A549 (cell line): ENCODE measurements at regions of chr5 and their contacts with region 1.

Region 1: GRCh38 chr5:67165526-67166459 is 30.8 kb downstream of the CD180 start:
- DNase-seq: peak; percentile 56 to 82
- ATAC-seq: peak; percentile 93 to 97
- H3K4me3 ChIP-seq: 0 out of 3 replicates have a peak overlapping the region, but pooled peaks have one; percentile 9
- H3K27ac ChIP-seq: peak overlapping the region; percentile 71 to 85
- H3K4me1 ChIP-seq: peaks cover 24% of the 10 kb centered on the region
- CTCF ChIP-seq: peak; percentile 77
- EP300 ChIP-seq: no peak
- POLR2A ChIP-seq: no peak
- RAD21 ChIP-seq: peak; percentile 66 to 71

Region 2: GRCh38 chr5:67181648-67182221 is 15.9 kb after region 1 on chr5:
- CTCF ChIA-PET with region 1: interaction called, 19 read pairs
- POLR2A ChIA-PET with region 1: no interaction called
- DNase-seq: no peak
- ATAC-seq: no peak
- H3K4me3 ChIP-seq: no peak overlapping the region
- H3K27ac ChIP-seq: no peak overlapping the region
- H3K4me1 ChIP-seq: no peaks in the 10 kb centered on the region
- CTCF ChIP-seq: no peak
- EP300 ChIP-seq: no peak
- POLR2A ChIP-seq: no peak
- RAD21 ChIP-seq: no peak

Region 3: DNA sequence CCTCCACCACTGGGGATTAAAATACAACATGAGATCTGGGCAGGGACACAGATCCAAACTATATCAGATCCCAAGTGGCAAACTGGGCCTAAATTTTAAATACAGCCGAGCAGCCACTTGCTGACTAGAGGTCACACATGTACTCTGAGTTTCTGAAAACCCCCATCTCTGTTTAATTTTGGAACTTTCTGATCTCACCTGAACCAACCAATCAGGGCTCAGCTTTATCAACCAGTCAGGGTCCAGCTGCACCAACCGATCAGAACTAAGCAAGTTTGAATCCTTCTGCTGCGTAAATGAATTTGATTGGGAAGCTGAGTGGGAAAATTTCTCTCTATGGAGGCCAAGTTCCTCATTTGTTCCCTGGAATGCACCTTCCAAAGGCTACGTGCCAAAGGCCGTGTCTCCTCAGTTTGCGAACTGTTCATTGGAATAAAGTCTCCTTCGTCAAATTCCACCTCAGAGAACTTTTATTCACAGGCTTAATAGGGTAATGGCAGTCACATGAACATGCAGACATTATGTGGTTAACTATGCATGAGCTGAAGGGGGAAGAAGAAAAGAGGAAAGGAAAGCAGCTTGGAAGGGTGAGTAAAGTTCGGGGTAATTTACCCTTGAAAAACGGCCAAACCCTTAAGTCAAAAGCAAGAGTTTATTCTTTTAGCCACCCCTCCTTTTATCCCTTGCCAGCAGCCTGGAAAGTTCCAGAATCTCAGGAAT is 27.1 kb after region 1 on chr5:
- CTCF ChIA-PET with region 1: interaction called, 13 read pairs
- POLR2A ChIA-PET with region 1: no interaction called
- DNase-seq: no peak
- ATAC-seq: no peak
- H3K4me3 ChIP-seq: no peak overlapping the region
- H3K27ac ChIP-seq: no peak overlapping the region
- H3K4me1 ChIP-seq: no peaks in the 10 kb centered on the region
- CTCF ChIP-seq: no peak
- EP300 ChIP-seq: no peak
- POLR2A ChIP-seq: no peak
- RAD21 ChIP-seq: no peak

Region 4: DNA sequence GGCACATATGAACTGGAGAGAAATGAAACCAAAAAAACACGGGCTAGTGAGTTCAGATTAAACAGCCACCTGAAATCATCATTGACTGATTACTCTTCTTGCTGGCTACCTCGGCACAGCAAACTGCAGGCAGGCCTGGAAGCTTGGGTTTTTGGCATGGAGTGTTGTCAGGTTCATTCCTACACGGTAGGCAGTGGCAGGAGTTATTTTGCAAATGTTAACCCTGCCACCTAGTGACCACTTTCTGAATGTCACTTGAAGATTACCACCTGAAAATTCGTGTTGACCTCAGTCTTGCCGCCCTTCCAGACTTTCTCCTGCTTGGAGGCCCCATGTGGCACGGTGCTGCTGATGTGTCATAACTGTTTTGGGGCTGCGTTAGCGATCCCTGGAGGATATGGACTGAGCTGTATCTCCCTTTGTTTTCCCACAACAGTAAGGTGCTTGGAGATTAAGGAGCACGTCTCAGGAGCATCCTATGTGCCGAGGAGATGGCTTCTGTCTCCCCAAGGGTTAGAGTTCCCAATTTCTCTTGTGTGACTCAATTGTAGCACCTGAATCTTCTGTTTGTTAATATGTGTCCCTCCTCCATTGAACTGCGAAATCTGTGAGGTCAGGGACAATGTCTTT is 43.5 kb after region 1 on chr5:
- CTCF ChIA-PET with region 1: interaction called, 190 read pairs
- POLR2A ChIA-PET with region 1: interaction called, 8 read pairs
- DNase-seq: peak; percentile 81 to 84
- ATAC-seq: peak; percentile 88 to 93
- H3K4me3 ChIP-seq: no peak overlapping the region
- H3K27ac ChIP-seq: peak overlapping the region; percentile 7 to 58; a peak in 4 of 6 replicates
- H3K4me1 ChIP-seq: peaks cover 33% of the 10 kb centered on the region
- CTCF ChIP-seq: peak; percentile 89
- EP300 ChIP-seq: no peak
- POLR2A ChIP-seq: no peak
- RAD21 ChIP-seq: peak; percentile 93 to 94

Region 5: GRCh38 chr5:68252673-68253623 is 1087.2 kb after region 1 on chr5:
- CTCF ChIA-PET with region 1: interaction called, 10 read pairs
- POLR2A ChIA-PET with region 1: interaction called, 3 read pairs
- DNase-seq: peak; percentile 64 to 67
- ATAC-seq: peak; percentile 96
- H3K4me3 ChIP-seq: no peak overlapping the region
- H3K27ac ChIP-seq: no peak overlapping the region
- H3K4me1 ChIP-seq: 0 out of 3 replicates have a peak, but pooled peaks cover 4% of the 10 kb centered on the region
- CTCF ChIP-seq: peak; percentile 79
- EP300 ChIP-seq: no peak
- POLR2A ChIP-seq: no peak
- RAD21 ChIP-seq: peak; percentile 89 to 90